ENCODE measurements at regions of chr11 and their contacts with region 1.

Region 1: DNA sequence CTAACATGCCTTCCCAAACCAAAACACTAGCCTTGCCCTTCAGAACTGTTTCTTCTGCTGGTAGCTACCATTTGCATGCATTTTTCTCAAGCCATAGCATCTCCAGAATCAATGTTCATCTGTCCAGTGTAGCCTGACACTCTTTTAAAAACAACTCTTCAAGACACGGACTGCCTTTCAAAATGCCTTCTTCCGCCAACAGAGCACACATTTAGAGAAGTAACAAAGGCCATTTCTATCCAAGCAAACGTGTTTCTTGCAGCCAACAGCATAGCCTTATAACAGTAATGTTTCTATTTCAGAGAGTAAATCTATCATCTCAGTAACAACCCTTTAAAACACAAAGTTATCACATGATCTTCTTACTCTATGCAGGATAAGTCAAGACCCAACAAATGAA is 143.3 kb upstream of the MTMR2 start:
- DNase-seq: no peak
- ATAC-seq: no peak
- H3K4me3 ChIP-seq: no peak overlapping the region
- H3K4me3 Mint-ChIP-seq: no peak overlapping the region
- H3K27ac ChIP-seq: no peak overlapping the region
- H3K27ac Mint-ChIP-seq: peak overlapping the region in 1 of 2 donors; percentile 79
- H3K4me1 ChIP-seq: peaks cover 9 to 16% of the 10 kb centered on the region in 2 experiments
- H3K4me1 Mint-ChIP-seq: peaks cover 57 to 74% (median 68%) of the 10 kb centered on the region in 3 donors
- H3K27me3 ChIP-seq: no peaks in the 10 kb centered on the region
- H3K27me3 Mint-ChIP-seq: no peaks in the 10 kb centered on the region

Region 2: DNA sequence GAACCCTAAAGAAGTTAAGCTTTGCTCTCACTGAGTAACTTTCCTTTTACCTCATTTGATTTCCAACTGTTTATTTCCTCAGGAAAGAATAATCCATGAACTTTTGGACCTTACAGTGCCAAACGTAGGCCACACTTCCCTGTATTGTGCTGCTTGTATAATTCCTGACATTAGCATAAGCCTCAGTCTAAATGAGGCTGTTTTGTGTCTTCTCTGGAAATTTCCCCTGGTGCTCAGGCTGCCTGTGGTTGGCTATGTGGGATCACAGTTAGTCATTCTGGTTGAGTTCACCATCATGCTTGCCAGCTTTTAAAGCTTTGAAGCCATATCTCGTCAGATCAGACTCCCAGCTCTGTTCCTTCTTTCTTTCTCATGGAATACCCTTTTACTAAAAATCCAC is 384.6 kb before region 1 on chr11:
- CTCF ChIA-PET with region 1: no interaction called
- POLR2A ChIA-PET with region 1: no interaction called
- DNase-seq: no peak
- ATAC-seq: no peak
- H3K4me3 ChIP-seq: no peak overlapping the region
- H3K4me3 Mint-ChIP-seq: peak overlapping the region in 1 of 3 donors; percentile 4
- H3K27ac ChIP-seq: no peak overlapping the region
- H3K27ac Mint-ChIP-seq: peak overlapping the region; percentile 86 to 95
- H3K4me1 ChIP-seq: peaks cover 0 to 3% of the 10 kb centered on the region in 2 experiments
- H3K4me1 Mint-ChIP-seq: peaks cover 62 to 84% (median 83%) of the 10 kb centered on the region in 3 donors
- H3K27me3 ChIP-seq: no peaks in the 10 kb centered on the region
- H3K27me3 Mint-ChIP-seq: no peaks in the 10 kb centered on the region

Region 3: GRCh38 chr11:96054870-96055705 is 12.1 kb before region 1 on chr11:
- CTCF ChIA-PET with region 1: interaction called, 3 to 12 read pairs
- POLR2A ChIA-PET with region 1: interaction called, 3 read pairs
- DNase-seq: peak in 1 of 35 experiments; percentile 53
- ATAC-seq: peak; percentile 43 to 64 (median 52)
- H3K4me3 ChIP-seq: no peak overlapping the region
- H3K4me3 Mint-ChIP-seq: no peak overlapping the region
- H3K27ac ChIP-seq: no peak overlapping the region
- H3K27ac Mint-ChIP-seq: peak overlapping the region; percentile 69 to 76
- H3K4me1 ChIP-seq: peaks cover 0 to 5% of the 10 kb centered on the region in 2 experiments
- H3K4me1 Mint-ChIP-seq: peaks cover 58 to 67% (median 62%) of the 10 kb centered on the region in 3 donors
- H3K27me3 ChIP-seq: no peaks in the 10 kb centered on the region
- H3K27me3 Mint-ChIP-seq: no peaks in the 10 kb centered on the region

Region 4: GRCh38 chr11:96098514-96099241 is 31.5 kb after region 1 on chr11:
- CTCF ChIA-PET with region 1: no interaction called
- POLR2A ChIA-PET with region 1: no interaction called
- DNase-seq: no peak
- ATAC-seq: no peak
- H3K4me3 ChIP-seq: no peak overlapping the region
- H3K4me3 Mint-ChIP-seq: no peak overlapping the region
- H3K27ac ChIP-seq: no peak overlapping the region
- H3K27ac Mint-ChIP-seq: no peak overlapping the region
- H3K4me1 ChIP-seq: no peaks in the 10 kb centered on the region
- H3K4me1 Mint-ChIP-seq: peaks cover 59 to 66% (median 64%) of the 10 kb centered on the region in 3 donors
- H3K27me3 ChIP-seq: no peaks in the 10 kb centered on the region
- H3K27me3 Mint-ChIP-seq: no peaks in the 10 kb centered on the region

Region 5: GRCh38 chr11:96109331-96110030 is 42.3 kb after region 1 on chr11:
- CTCF ChIA-PET with region 1: no interaction called
- POLR2A ChIA-PET with region 1: no interaction called
- DNase-seq: no peak
- ATAC-seq: no peak
- H3K4me3 ChIP-seq: no peak overlapping the region
- H3K4me3 Mint-ChIP-seq: no peak overlapping the region
- H3K27ac ChIP-seq: no peak overlapping the region
- H3K27ac Mint-ChIP-seq: no peak overlapping the region
- H3K4me1 ChIP-seq: peaks cover 3 to 20% of the 10 kb centered on the region in 2 experiments
- H3K4me1 Mint-ChIP-seq: peaks cover 30 to 71% (median 56%) of the 10 kb centered on the region in 3 donors
- H3K27me3 ChIP-seq: no peaks in the 10 kb centered on the region
- H3K27me3 Mint-ChIP-seq: no peaks in the 10 kb centered on the region

Region 6: GRCh38 chr11:97754976-97755375 is 1687.8 kb after region 1 on chr11:
- CTCF ChIA-PET with region 1: no interaction called
- POLR2A ChIA-PET with region 1: no interaction called
- DNase-seq: no peak
- ATAC-seq: no peak
- H3K4me3 ChIP-seq: no peak overlapping the region
- H3K4me3 Mint-ChIP-seq: no peak overlapping the region
- H3K27ac ChIP-seq: no peak overlapping the region
- H3K27ac Mint-ChIP-seq: no peak overlapping the region
- H3K4me1 ChIP-seq: no peaks in the 10 kb centered on the region
- H3K4me1 Mint-ChIP-seq: no peaks in the 10 kb centered on the region
- H3K27me3 ChIP-seq: no peaks in the 10 kb centered on the region
- H3K27me3 Mint-ChIP-seq: no peaks in the 10 kb centered on the region

Measured in T-cell (primary cell).